ENCODE measurements at regions of chr6 and their contacts with region 1.

Region 1: GRCh38 chr6:63764318-63764916 is 128.8 kb downstream of the PHF3 start:
- DNase-seq: no peak
- ATAC-seq: peak in 3 of 4 donors; percentile 58 to 66 (median 63)
- H3K4me3 ChIP-seq: no peak overlapping the region
- H3K27ac ChIP-seq: no peak overlapping the region
- H3K4me1 ChIP-seq: no peaks in the 10 kb centered on the region
- H3K27me3 ChIP-seq: no peaks in the 10 kb centered on the region
- CTCF ChIP-seq: peak; percentile 34 to 74 (median 46)

Region 2: GRCh38 chr6:63347599-63347998 is 416.8 kb before region 1 on chr6:
- intact Hi-C with region 1: loop called in 2 of 3 experiments (anchors 5 to 10 kb)
- DNase-seq: no peak
- ATAC-seq: peak in 1 of 4 donors; percentile 19
- H3K4me3 ChIP-seq: no peak overlapping the region
- H3K27ac ChIP-seq: no peak overlapping the region
- H3K4me1 ChIP-seq: peaks cover 0 to under 1% (median 0%) of the 10 kb centered on the region in 3 donors
- H3K27me3 ChIP-seq: no peaks in the 10 kb centered on the region
- CTCF ChIP-seq: no peak

Region 3: GRCh38 chr6:63598049-63599036 is 166.1 kb before region 1 on chr6:
- intact Hi-C with region 1: loop called in 2 of 3 experiments (anchors 10 kb)
- DNase-seq: peak; percentile 59 to 78 (median 62)
- ATAC-seq: peak; percentile 97 to 99 (median 98)
- H3K4me3 ChIP-seq: peak overlapping the region; percentile 13 to 49 (median 36)
- H3K27ac ChIP-seq: peak overlapping the region in 3 of 4 donors; percentile 7 to 80 (median 62)
- H3K4me1 ChIP-seq: no peaks in the 10 kb centered on the region
- H3K27me3 ChIP-seq: peaks cover 0 to 3% (median 0%) of the 10 kb centered on the region in 4 donors
- CTCF ChIP-seq: peak; percentile 49 to 79 (median 68)